Activated T-helper 2 cell treated with anti-CD3 and anti-CD28 coated beads, Interferon-gamma antibody, Interleukin-2, Interleukin-4, amounts not matched to agents 10 μg/mL and 5 μg/mL and 100 μg/mL, durations not matched to agents 14 hours and 24 hours and 36 hours (primary cell): ENCODE measurements at regions of chrX and their contacts with region 1.

Region 1: DNA sequence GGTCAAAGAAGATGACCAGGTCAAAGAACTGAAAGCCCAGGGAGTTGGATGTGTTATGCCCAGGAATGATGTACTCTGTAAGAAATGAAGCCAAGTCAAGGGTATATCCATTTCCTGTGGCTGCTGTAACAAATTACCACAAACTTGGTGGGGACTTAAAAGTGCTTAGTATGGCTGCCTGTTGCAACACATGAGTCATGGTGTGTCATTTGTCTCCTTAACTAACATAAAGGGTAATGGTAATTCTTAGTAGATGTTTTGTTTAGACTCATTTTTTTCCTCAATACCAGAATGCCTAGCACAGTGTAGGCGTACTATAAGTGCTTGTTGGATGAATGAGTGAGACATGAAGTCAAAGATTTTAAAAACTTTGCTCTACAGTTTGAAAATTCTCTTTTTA is 45.7 kb downstream of the SYTL5 start:
- DNase-seq: no peak
- H3K4me3 Mint-ChIP-seq: no peak overlapping the region
- H3K27ac Mint-ChIP-seq: no peak overlapping the region
- H3K4me1 Mint-ChIP-seq: peaks cover 3% of the 10 kb centered on the region
- H3K27me3 Mint-ChIP-seq: no peaks in the 10 kb centered on the region

Region 2: GRCh38 chrX:37976153-37976552 is 75.9 kb before region 1 on chrX:
- intact Hi-C with region 1: loop called (anchors 5 kb)
- DNase-seq: no peak
- H3K4me3 Mint-ChIP-seq: no peak overlapping the region
- H3K27ac Mint-ChIP-seq: no peak overlapping the region
- H3K4me1 Mint-ChIP-seq: peaks cover 14% of the 10 kb centered on the region
- H3K27me3 Mint-ChIP-seq: peaks cover 7% of the 10 kb centered on the region

Region 3: GRCh38 chrX:38570396-38570795 is 518.3 kb after region 1 on chrX:
- intact Hi-C with region 1: no loop called
- DNase-seq: no peak
- H3K4me3 Mint-ChIP-seq: no peak overlapping the region
- H3K27ac Mint-ChIP-seq: no peak overlapping the region
- H3K4me1 Mint-ChIP-seq: no peaks in the 10 kb centered on the region
- H3K27me3 Mint-ChIP-seq: peaks cover 14% of the 10 kb centered on the region